ENCODE measurements at regions of chr14 and their contacts with region 1.

Region 1: DNA sequence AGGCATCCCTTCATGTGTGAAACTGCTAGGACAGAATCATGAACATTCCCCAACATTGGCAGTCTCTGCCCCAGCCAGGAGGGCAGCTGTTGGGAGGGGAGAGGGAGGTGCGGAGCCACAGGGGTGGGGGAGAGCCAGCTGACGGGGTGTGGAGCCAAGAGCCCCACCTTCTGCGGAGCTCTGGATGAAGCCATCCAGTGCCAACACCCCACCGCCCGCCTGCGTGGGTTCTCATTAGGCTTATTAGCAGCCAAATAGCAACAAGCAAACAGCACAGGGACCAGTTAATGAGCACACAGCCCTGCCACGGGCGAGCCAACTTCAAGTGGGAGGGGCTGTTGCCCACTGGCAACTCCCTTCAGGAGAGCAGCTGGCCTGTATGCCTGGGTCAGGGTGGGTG is 12.1 kb downstream of the LTBP2 start:
- DNase-seq: no peak
- H3K4me3 ChIP-seq: no peak overlapping the region
- CTCF ChIP-seq: no peak

Region 2: DNA sequence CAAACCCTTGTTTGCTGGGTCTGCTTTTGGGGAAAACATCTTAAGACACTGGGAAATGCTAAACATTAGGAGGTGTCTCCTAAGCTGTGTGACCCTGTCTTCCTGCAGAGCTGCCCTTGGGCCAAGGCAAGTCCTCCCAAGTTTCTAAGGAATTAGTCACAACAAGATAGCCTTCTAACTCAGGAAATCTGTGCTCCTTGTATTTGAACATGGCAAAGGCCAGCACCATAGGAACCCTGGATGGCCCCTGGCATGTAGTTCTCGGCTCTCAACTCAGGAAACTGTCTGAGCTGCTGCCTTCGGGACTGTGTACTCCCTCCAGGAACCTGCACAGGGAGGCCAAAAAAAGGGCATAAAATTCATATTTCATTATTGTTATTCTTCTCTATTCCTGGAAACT is 49.7 kb after region 1 on chr14:
- in situ Hi-C with region 1: loop called (anchors 5 kb)
- DNase-seq: no peak
- H3K4me3 ChIP-seq: no peak overlapping the region
- CTCF ChIP-seq: no peak

Region 3: DNA sequence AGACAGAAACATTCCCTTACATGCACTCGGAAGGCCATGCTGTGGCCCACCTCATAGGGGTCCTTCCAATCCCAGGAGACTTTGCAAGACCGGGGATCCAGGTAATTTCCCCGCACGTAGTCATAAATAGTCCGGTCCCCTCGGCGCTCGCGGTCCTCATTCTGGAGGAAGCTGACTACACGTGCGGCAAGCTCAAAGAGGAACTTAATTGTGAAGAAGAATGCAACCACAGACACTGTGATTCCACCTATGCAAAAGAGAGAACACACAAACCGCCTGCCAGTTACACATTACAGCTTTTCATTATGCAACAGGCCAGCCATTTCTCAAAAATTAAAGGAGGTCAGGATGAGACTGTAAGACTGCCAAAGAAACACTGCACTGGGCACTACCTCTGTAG is 84.5 kb after region 1 on chr14:
- in situ Hi-C with region 1: loop called (anchors 5 kb)
- DNase-seq: no peak
- H3K4me3 ChIP-seq: no peak overlapping the region
- CTCF ChIP-seq: no peak